ENCODE measurements at regions of chr17 and their contacts with region 1.

Region 1: GRCh38 chr17:46193626-46194392 is 580 bp upstream of the KANSL1 start:
- DNase-seq: peak; percentile 90 to 96 (median 93)
- ATAC-seq: peak; percentile 65
- H3K4me3 ChIP-seq: peak overlapping the region; percentile 90 to 91
- H3K4me3 Mint-ChIP-seq: peak overlapping the region; percentile 88
- H3K27ac ChIP-seq: peak overlapping the region; percentile 96 to 100
- H3K27ac Mint-ChIP-seq: peak overlapping the region; percentile 92
- H3K4me1 ChIP-seq: peaks cover 60% of the 10 kb centered on the region
- H3K4me1 Mint-ChIP-seq: peaks cover 60% of the 10 kb centered on the region
- H3K27me3 ChIP-seq: no peaks in the 10 kb centered on the region
- H3K27me3 Mint-ChIP-seq: no peaks in the 10 kb centered on the region
- CTCF ChIP-seq: peak; percentile 46

Region 2: GRCh38 chr17:45317112-45317928 is 876.5 kb before region 1 on chr17:
- CTCF ChIA-PET with region 1: no interaction called
- POLR2A ChIA-PET with region 1: no interaction called
- intact Hi-C with region 1: loop called in 1 of 2 experiments (anchors 5 kb)
- DNase-seq: peak; percentile 99 to 100 (median 100)
- ATAC-seq: peak; percentile 81
- H3K4me3 ChIP-seq: peak overlapping the region; percentile 55 to 81
- H3K4me3 Mint-ChIP-seq: peak overlapping the region; percentile 95
- H3K27ac ChIP-seq: peak overlapping the region; percentile 75 to 81
- H3K27ac Mint-ChIP-seq: peak overlapping the region; percentile 94
- H3K4me1 ChIP-seq: peaks cover 78% of the 10 kb centered on the region
- H3K4me1 Mint-ChIP-seq: peaks cover 80% of the 10 kb centered on the region
- H3K27me3 ChIP-seq: no peaks in the 10 kb centered on the region
- H3K27me3 Mint-ChIP-seq: no peaks in the 10 kb centered on the region
- CTCF ChIP-seq: no peak

Region 3: DNA sequence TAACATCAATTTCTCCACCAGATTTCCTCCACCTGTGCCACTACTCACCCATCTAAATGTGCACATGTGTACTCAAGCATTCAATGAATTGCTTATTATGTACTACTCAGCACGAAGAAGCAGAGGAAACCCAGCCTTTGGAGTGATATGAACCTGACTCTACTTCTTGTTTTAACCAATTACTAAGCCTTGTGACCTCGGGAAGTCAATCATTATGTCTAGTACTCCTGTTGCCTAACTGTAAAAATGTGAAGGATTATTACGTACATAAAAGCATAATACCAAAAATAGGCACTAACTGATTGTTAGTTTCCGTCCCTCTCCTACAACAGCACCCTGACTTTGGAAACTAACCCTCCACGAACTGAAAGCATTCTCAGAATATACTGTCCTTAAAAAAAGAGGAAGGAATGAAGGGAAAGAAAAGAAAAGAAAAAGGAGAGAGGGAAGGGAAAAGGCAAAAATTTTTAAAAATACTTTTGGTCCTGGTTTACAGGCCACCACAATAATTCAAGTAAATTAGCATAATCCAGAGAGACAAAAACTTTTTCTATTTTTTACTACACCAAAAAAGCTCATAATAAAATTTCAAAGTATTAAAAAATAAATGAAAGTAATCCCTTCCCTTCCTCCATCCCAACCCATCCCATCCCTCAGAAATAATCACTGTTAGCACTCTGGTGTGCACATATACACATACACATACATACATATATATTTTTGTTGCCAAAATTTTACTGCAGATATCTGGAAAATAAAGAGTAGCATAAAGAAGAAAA is 54.2 kb before region 1 on chr17:
- CTCF ChIA-PET with region 1: interaction called, 4 read pairs
- POLR2A ChIA-PET with region 1: interaction called, 6 read pairs
- intact Hi-C with region 1: loop called (anchors 2 to 5 kb)
- DNase-seq: no peak
- ATAC-seq: no peak
- H3K4me3 ChIP-seq: no peak overlapping the region
- H3K4me3 Mint-ChIP-seq: no peak overlapping the region
- H3K27ac ChIP-seq: no peak overlapping the region
- H3K27ac Mint-ChIP-seq: peak overlapping the region; percentile 73
- H3K4me1 ChIP-seq: peaks cover 77% of the 10 kb centered on the region
- H3K4me1 Mint-ChIP-seq: peaks cover 91% of the 10 kb centered on the region
- H3K27me3 ChIP-seq: no peaks in the 10 kb centered on the region
- H3K27me3 Mint-ChIP-seq: no peaks in the 10 kb centered on the region
- CTCF ChIP-seq: no peak

Region 4: DNA sequence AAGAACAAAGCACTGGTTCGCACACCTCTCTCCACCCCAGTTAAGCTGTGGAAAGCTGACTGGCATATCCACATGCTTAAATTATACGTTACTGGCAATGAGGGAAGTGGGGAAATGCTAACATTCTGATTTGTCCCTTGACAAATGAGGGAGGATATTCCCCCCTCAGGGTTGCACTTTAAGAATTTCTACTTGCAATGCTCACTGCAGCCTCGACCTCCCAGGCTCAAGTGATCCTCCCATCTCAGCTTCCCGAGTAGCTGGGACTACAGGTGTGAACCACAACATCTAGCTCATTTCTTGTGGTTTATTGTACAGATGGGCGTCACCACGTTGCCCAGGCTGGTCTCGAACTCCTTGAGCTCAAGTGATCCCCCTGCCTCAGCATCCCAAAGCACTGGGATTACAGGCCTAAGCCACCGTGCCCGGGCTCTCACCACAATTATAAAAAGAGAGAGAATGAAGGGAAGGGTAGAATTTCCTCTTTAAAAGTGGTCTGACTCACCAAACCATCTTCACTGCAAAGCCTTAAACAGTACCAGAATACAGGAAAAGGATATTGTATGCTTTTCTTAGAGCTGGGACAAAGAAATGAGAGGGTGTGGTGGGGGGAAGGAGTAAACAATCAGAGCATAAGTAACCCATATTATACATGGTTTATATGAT is 39.5 kb before region 1 on chr17:
- CTCF ChIA-PET with region 1: interaction called, 3 read pairs
- POLR2A ChIA-PET with region 1: interaction called, 4 read pairs
- intact Hi-C with region 1: loop called in 1 of 2 experiments (anchors 5 kb)
- DNase-seq: peak in 4 of 9 experiments; percentile 28 to 52 (median 34)
- ATAC-seq: peak; percentile 64
- H3K4me3 ChIP-seq: no peak overlapping the region
- H3K4me3 Mint-ChIP-seq: peak overlapping the region; percentile 62
- H3K27ac ChIP-seq: peak overlapping the region in 1 of 2 experiments; percentile 49
- H3K27ac Mint-ChIP-seq: peak overlapping the region; percentile 83
- H3K4me1 ChIP-seq: peaks cover 93% of the 10 kb centered on the region
- H3K4me1 Mint-ChIP-seq: peaks cover 90% of the 10 kb centered on the region
- H3K27me3 ChIP-seq: no peaks in the 10 kb centered on the region
- H3K27me3 Mint-ChIP-seq: no peaks in the 10 kb centered on the region
- CTCF ChIP-seq: no peak

Region 5: DNA sequence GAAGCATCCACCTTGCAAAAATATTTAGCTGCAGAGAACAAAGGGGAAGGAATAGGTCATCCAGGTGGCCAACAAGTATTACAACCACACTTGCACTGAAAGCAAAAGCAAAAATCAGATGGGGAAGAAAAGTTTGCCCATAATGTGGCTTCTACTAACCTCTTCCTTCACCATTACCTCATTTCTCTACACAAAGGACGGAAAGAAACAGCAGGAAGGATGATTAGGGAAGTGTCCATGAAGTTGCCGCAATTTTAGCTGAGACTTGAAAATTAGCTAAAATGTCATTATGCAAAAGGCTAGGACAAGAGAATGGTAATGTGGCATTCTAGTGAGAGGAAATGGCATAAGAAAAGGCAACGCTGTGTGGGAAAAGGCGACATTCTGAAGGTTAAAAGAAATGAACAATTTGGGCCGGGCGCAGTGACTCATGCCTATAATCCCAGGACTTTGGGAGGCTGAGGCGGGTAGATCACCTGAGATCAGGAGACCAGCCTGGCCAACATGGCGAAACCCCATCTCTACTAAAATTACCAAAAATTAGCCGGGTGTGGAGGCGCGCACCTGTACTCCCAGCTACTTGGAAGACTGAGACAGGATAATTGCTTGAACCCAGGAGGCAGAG is 14.3 kb before region 1 on chr17:
- CTCF ChIA-PET with region 1: interaction called, 9 read pairs
- POLR2A ChIA-PET with region 1: interaction called, 14 read pairs
- intact Hi-C with region 1: no loop called
- DNase-seq: peak in 1 of 9 experiments; percentile 40
- ATAC-seq: no peak
- H3K4me3 ChIP-seq: no peak overlapping the region
- H3K4me3 Mint-ChIP-seq: peak overlapping the region; percentile 46
- H3K27ac ChIP-seq: no peak overlapping the region
- H3K27ac Mint-ChIP-seq: peak overlapping the region; percentile 70
- H3K4me1 ChIP-seq: peaks cover 84% of the 10 kb centered on the region
- H3K4me1 Mint-ChIP-seq: peaks cover 94% of the 10 kb centered on the region
- H3K27me3 ChIP-seq: no peaks in the 10 kb centered on the region
- H3K27me3 Mint-ChIP-seq: no peaks in the 10 kb centered on the region
- CTCF ChIP-seq: no peak

Region 6: DNA sequence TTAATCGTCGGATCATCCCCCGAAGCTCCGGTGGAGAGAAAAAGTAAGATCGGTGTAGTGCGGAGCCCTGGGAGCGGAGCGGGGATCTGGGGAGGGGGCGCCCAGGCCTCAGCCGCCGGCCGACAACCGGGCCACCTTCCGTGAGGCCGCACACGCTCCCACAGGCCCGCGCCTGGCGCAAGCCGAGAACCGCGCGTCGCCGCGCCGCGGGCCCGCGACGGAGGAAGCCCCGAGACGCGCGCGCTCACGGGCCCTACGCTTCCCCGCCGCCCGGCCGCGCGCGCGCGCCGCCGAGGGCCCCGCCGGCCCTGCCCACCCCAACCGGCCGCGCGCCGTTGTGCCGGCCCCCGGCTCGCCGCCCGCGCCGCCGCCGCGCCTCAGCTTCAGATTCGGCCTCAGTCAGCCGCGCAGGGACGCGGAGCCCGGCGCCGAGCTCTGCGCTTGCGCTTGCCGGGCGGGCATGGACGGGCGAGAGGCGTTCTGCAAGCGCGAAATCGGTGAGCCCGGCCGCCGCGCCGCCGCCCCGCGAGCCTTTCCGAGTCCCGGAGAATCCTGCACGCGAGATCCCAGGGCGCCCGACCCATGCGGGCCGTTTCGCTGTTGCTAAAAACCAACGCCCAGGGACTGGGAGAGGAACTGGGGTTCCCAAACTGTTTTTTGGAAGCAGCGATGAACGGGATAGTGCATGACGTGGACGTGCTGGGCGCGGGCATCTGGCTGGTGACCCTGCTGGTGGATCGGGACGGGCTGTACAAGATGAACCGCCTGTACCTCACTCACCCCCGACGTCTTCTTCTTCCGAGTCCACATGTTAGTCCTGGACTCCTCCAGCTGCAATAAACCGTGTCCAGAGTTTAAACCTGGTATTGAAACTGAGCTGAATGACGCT is 73.1 kb after region 1 on chr17:
- CTCF ChIA-PET with region 1: no interaction called
- POLR2A ChIA-PET with region 1: interaction called, 3 read pairs
- intact Hi-C with region 1: loop called (anchors 2 to 5 kb)
- DNase-seq: peak; percentile 77 to 94 (median 85)
- ATAC-seq: peak; percentile 53
- H3K4me3 ChIP-seq: peak overlapping the region; percentile 85 to 97
- H3K4me3 Mint-ChIP-seq: peak overlapping the region; percentile 87
- H3K27ac ChIP-seq: peak overlapping the region; percentile 72 to 83
- H3K27ac Mint-ChIP-seq: peak overlapping the region; percentile 91
- H3K4me1 ChIP-seq: peaks cover 30% of the 10 kb centered on the region
- H3K4me1 Mint-ChIP-seq: peaks cover 29% of the 10 kb centered on the region
- H3K27me3 ChIP-seq: no peaks in the 10 kb centered on the region
- H3K27me3 Mint-ChIP-seq: no peaks in the 10 kb centered on the region
- CTCF ChIP-seq: no peak

Region 7: GRCh38 chr17:46922804-46923635 is 729.2 kb after region 1 on chr17 and contains the start of gene GOSR2:
- CTCF ChIA-PET with region 1: no interaction called
- POLR2A ChIA-PET with region 1: no interaction called
- intact Hi-C with region 1: loop called in 1 of 2 experiments (anchors 10 kb)
- DNase-seq: peak; percentile 84 to 96 (median 88)
- ATAC-seq: peak; percentile 91
- H3K4me3 ChIP-seq: peak within 1 kb of the TSS; percentile 75 to 92
- H3K4me3 Mint-ChIP-seq: peak within 1 kb of the TSS; percentile 95
- H3K27ac ChIP-seq: peak within 1 kb of the TSS; percentile 86 to 91
- H3K27ac Mint-ChIP-seq: peak within 1 kb of the TSS; percentile 100
- H3K4me1 ChIP-seq: peaks cover 26% of the 10 kb centered on the region
- H3K4me1 Mint-ChIP-seq: peaks cover 59% of the 10 kb centered on the region
- H3K27me3 ChIP-seq: no peaks in the 10 kb centered on the region
- H3K27me3 Mint-ChIP-seq: no peaks in the 10 kb centered on the region
- CTCF ChIP-seq: no peak
- total RNA-seq, gene GOSR2: 45.5 to 47.3 TPM